ENCODE measurements at regions of chr10 and their contacts with region 1.

Region 1: GRCh38 chr10:78972947-78973900 is 95.5 kb upstream of the ZMIZ1 start:
- DNase-seq: peak; percentile 65
- H3K4me3 Mint-ChIP-seq: peak overlapping the region; percentile 41
- H3K27ac Mint-ChIP-seq: peak overlapping the region; percentile 73
- H3K4me1 Mint-ChIP-seq: peaks cover 26% of the 10 kb centered on the region
- H3K27me3 Mint-ChIP-seq: no peaks in the 10 kb centered on the region

Region 2: DNA sequence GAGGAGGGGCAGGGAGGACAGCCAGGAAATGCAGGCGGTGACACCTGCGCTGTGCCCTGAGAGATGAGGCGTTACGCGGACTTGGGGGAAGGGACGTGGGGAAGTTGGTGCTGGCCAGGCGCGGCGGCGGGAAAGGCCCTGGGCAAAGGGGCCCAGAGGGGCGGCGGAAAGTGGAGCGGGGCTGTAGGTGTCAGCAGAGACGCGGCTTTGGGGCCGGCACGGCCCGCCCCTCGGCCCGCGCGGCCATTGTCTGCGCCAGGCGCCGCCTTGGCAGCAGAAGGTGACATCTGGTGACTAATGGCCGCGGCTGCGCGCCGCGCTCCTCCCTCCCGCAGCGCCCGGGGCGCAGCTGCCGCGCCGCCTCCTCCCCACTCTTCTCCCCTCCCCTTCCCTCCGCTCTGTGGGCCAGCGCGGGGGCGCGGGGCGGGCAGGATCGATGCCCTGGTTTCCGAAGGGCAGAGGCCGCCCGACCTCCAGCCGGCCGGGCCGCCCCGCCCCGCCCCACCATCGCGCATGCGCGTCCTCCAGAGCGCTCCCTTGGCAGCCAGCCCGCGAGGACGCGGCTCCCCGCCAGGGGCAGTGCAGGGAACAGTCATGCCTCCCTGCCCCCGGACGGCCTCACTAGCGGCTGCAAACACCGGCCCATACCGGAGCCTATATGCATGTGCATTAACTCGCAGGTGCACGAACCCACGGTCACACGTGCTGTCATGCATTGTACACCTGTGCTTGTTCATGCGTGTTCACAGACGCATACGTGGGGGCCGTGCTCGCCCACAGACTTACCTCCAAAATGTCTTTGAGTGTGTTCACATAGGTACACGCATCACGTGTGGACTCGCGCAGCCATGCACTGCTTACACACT is 670.0 kb before region 1 on chr10:
- intact Hi-C with region 1: loop called (anchors 1 kb)
- DNase-seq: peak; percentile 91
- H3K4me3 Mint-ChIP-seq: peak overlapping the region; percentile 87
- H3K27ac Mint-ChIP-seq: peak overlapping the region; percentile 94
- H3K4me1 Mint-ChIP-seq: peaks cover 16% of the 10 kb centered on the region
- H3K27me3 Mint-ChIP-seq: peaks cover 20% of the 10 kb centered on the region

Region 3: GRCh38 chr10:78763651-78764311 is 209.4 kb before region 1 on chr10:
- intact Hi-C with region 1: loop called (anchors 5 kb)
- DNase-seq: no peak
- H3K4me3 Mint-ChIP-seq: no peak overlapping the region
- H3K27ac Mint-ChIP-seq: peak overlapping the region; percentile 89
- H3K4me1 Mint-ChIP-seq: peaks cover 15% of the 10 kb centered on the region
- H3K27me3 Mint-ChIP-seq: no peaks in the 10 kb centered on the region

Region 4: DNA sequence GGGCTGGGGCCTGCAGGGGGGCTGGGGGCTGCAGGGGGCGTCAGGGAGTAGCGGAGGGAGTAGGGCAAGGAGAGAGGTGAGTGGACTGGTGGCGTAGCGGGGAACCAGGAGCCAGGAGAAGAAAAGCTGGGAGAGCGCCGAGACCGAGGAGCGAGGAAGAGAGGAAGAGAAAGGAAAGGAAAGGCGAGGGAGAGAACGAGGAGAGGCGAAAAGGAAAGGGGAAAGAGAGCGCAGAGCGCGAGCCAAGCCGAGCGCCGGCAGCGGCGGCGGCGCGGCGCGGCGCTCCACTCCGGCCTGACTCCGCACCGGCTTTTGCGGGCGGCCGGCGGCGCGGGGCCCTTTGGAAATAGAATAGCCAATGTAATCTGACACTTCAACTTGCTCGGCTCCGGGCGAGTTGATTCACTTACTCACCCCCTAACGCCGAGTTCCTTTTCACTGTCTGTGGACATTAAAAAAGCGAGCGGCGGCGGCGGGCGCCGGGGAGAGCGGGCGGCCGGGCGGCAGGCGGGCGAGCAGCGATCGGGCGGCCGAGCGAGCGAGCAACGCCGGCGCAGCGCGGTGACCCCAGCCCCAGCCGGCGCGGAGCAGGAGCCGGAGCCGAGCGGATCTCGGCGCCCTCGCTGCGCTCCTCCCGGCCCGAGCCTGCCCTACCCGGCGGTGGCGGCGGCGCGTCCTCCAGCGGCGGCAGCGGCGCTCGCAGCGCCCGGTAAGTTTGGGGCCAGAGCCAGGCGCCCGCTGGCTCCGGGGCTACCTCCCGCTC is 95.5 kb after region 1 on chr10 and contains the start of gene ZMIZ1:
- intact Hi-C with region 1: loop called (anchors 1 kb)
- DNase-seq: peak; percentile 81
- H3K4me3 Mint-ChIP-seq: peak within 1 kb of the TSS; percentile 86
- H3K27ac Mint-ChIP-seq: peak within 1 kb of the TSS; percentile 80
- H3K4me1 Mint-ChIP-seq: peaks cover 29% of the 10 kb centered on the region
- H3K27me3 Mint-ChIP-seq: peaks cover 13% of the 10 kb centered on the region
- total RNA-seq, gene ZMIZ1: 79.2 and 80.4 TPM in 2 replicates

Region 5: DNA sequence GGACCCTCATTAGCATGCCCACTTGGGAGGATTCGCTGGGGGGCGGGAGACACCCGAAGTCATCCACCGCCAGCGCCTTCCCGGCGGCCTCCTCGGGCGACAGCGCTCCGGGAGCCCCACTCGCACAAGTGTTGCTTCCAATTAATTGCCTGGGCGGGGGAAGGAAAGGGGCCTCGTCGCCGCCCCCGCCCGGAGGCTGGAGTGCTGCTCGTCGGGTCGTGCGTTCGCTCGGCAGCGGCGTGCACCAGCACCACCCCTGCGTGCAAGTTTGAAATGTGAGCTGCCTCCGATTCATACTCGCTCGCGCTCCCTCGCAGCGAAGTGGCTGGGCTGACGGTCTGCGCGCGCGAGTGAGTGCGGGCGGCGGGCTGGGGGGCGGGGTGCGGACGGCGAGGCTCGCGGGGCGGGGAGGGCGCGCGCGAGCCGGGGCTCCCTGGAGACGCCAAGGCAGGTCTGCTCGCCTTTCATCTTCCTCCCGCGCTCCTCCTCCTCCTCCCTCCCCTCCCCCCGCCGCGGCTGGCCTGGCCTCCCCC is 269.5 kb after region 1 on chr10:
- intact Hi-C with region 1: loop called (anchors 1 kb)
- DNase-seq: peak; percentile 66
- H3K4me3 Mint-ChIP-seq: peak overlapping the region; percentile 78
- H3K27ac Mint-ChIP-seq: peak overlapping the region; percentile 78
- H3K4me1 Mint-ChIP-seq: peaks cover 56% of the 10 kb centered on the region
- H3K27me3 Mint-ChIP-seq: no peaks in the 10 kb centered on the region

Region 6: DNA sequence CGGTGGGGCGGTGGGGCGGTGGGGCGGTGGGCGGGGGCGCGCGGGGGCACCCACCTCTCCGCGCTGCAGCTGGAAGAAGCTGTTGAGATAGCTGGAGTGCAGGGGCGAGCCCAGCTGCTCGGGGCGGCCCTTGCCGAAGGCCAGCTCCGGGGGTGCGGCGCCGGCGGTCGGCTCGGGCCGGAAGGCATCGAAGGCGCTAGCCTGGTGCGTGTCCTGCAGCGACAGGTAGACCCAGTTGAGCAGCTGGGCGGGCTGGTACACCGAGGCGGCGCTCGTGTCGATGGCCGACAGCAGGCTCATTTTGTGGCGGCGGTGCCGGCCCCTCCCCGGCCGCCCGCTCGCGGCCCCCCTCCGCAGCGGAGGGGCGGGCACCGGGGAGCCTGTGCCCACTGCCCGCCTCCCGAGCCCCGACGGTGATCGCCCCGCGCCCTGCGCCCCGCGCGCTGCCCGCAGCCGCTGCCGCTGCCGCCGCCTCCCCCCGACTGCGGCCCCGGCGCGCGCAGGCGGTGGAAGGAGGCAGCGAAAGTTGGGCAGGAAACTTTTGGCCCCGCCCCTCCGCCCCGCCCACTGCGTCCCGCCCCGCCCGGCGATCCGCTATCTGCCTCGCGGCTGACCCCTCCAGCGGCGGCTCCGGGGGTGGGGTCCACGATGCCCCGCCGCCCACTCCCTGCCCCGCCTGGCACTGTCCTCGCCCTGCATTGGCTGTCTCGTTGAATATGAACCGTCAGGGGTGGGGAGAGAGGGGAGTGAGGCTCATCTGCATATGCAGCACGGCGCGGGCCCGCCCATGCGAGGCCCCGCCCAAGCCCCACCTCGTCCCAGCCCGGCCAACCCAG is 472.1 kb after region 1 on chr10 and contains the start of gene ZCCHC24:
- intact Hi-C with region 1: loop called (anchors 10 kb)
- DNase-seq: peak; percentile 94
- H3K4me3 Mint-ChIP-seq: peak within 1 kb of the TSS; percentile 82
- H3K27ac Mint-ChIP-seq: peak within 1 kb of the TSS; percentile 21
- H3K4me1 Mint-ChIP-seq: peaks cover 21% of the 10 kb centered on the region
- H3K27me3 Mint-ChIP-seq: peaks cover 34% of the 10 kb centered on the region
- total RNA-seq, gene ZCCHC24: 2.1 and 2.6 TPM in 2 replicates

Measured in activated T-helper 2 cell treated with anti-CD3 and anti-CD28 coated beads, Interferon-gamma antibody, Interleukin-2, Interleukin-4, amounts not matched to agents 10 μg/mL and 5 μg/mL and 100 μg/mL, durations not matched to agents 14 hours and 24 hours and 36 hours (primary cell).